Panc1 (cell line): ENCODE measurements at regions of chr18 and their contacts with region 1.

Region 1: GRCh38 chr18:59041819-59042815 is 97.6 kb upstream of the SEC11C start:
- DNase-seq: no peak
- ATAC-seq: no peak
- H3K4me3 ChIP-seq: no peak overlapping the region
- H3K27ac ChIP-seq: no peak overlapping the region
- H3K4me1 ChIP-seq: no peaks in the 10 kb centered on the region
- H3K27me3 ChIP-seq: no peaks in the 10 kb centered on the region
- CTCF ChIP-seq: no peak

Region 2: DNA sequence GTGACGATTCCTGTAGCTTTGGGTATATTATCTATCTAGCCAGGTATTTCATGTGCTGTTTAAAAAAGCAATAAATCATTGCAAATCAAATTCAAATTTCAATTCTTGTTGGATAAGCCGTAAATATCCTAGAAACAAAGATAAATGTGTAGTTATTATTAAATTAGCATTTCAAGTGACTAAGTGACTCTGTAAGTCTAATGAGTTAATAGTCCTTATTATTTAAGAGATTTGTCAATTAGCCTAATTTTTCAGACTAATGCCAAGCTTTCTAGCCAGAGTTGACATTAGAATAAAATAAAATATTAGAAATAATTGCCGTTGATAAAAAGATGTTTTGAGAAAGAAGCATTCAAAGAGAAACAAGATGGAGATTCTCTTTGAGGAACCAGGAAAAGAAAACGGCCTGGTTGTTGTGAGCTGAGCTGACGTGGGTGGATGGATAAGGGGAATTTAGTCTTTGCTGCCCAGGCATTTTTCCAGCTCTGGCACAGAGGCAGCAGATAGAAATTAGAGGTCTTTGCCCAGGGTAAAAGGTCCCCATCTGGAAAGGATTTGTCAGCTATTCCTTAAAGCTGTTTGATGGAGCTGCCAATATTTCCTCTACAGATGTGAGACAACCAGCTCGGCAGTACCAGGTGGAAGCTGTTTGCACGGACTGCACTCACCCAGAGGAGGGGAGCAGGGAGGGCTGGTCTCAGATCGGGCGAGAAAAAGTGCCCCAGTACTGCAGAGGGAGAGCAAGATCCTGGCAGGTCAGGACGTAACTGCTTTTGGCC is 19.8 kb before region 1 on chr18:
- CTCF ChIA-PET with region 1: no interaction called
- POLR2A ChIA-PET with region 1: interaction called, 10 read pairs
- in situ Hi-C with region 1: no loop called
- intact Hi-C with region 1: no loop called
- DNase-seq: no peak
- ATAC-seq: no peak
- H3K4me3 ChIP-seq: no peak overlapping the region
- H3K27ac ChIP-seq: peak overlapping the region; percentile 36; the same call in 1 of the 2 replicates
- H3K4me1 ChIP-seq: 0 out of 2 replicates have a peak, but pooled peaks cover 2% of the 10 kb centered on the region
- H3K27me3 ChIP-seq: no peaks in the 10 kb centered on the region
- CTCF ChIP-seq: no peak